ENCODE measurements at regions of chr1 and their contacts with region 1.

Region 1: GRCh38 chr1:6489799-6490180 is 1.7 kb downstream of the PLEKHG5 start:
- DNase-seq: peak; percentile 50
- ATAC-seq: peak; percentile 81
- H3K4me3 ChIP-seq: peak overlapping the region; percentile 88 to 99 (median 89)
- H3K27ac ChIP-seq: no peak overlapping the region
- H3K4me1 ChIP-seq: peaks cover 52% of the 10 kb centered on the region
- H3K27me3 ChIP-seq: peaks cover 0 to under 1% of the 10 kb centered on the region in 2 experiments; a peak in 1 of 5 replicates
- CTCF ChIP-seq: peak; percentile 92
- EP300 ChIP-seq: no peak
- POLR2A ChIP-seq: no peak
- RAD21 ChIP-seq: peak; percentile 47

Region 2: DNA sequence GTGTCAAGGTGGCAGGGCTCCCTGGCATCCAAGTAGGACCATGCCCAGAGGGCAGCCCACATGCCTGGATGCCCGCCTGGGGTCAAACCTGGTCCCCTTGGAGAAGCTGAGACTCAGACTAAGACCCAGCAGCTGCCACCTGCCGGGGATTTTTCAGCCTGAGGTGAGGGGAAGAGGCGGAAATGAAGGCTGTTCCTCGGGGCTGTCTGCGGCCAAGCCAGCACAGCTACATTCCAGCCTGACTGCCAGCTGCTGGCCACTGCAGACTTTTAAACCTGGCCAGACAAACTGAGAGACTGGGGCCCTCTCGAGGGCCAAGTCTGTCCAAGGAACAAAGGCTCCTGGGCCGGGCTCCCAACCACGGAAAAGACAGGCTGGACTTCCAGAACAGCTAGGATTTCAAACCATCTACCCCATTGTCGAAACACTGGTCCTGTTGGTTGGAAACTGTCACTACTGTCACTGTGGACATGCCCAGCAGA is 23.6 kb after region 1 on chr1:
- CTCF ChIA-PET with region 1: no interaction called
- POLR2A ChIA-PET with region 1: interaction called, 13 read pairs
- in situ Hi-C with region 1: no loop called
- intact Hi-C with region 1: no loop called
- DNase-seq: no peak
- ATAC-seq: peak; percentile 58
- H3K4me3 ChIP-seq: peak overlapping the region in 2 of 3 experiments; percentile 31 to 57; a peak in 4 of 6 replicates
- H3K27ac ChIP-seq: peak overlapping the region; percentile 40
- H3K4me1 ChIP-seq: peaks cover 59% of the 10 kb centered on the region
- H3K27me3 ChIP-seq: peaks cover 3 to 5% of the 10 kb centered on the region in 2 experiments; a peak in 3 of 5 replicates
- CTCF ChIP-seq: peak; percentile 51
- EP300 ChIP-seq: no peak
- POLR2A ChIP-seq: no peak
- RAD21 ChIP-seq: no peak

Region 3: GRCh38 chr1:6523566-6523965 is 33.8 kb after region 1 on chr1:
- CTCF ChIA-PET with region 1: interaction called, 24 read pairs
- POLR2A ChIA-PET with region 1: no interaction called
- in situ Hi-C with region 1: loop called (anchors 5 kb)
- intact Hi-C with region 1: loop called (anchors 1 kb)
- DNase-seq: peak; percentile 65
- ATAC-seq: peak; percentile 81
- H3K4me3 ChIP-seq: no peak overlapping the region
- H3K27ac ChIP-seq: no peak overlapping the region
- H3K4me1 ChIP-seq: no peaks in the 10 kb centered on the region
- H3K27me3 ChIP-seq: no peaks in the 10 kb centered on the region
- CTCF ChIP-seq: peak; percentile 81
- EP300 ChIP-seq: no peak
- POLR2A ChIP-seq: no peak
- RAD21 ChIP-seq: no peak; the same call in 1 of the 2 replicates

Region 4: DNA sequence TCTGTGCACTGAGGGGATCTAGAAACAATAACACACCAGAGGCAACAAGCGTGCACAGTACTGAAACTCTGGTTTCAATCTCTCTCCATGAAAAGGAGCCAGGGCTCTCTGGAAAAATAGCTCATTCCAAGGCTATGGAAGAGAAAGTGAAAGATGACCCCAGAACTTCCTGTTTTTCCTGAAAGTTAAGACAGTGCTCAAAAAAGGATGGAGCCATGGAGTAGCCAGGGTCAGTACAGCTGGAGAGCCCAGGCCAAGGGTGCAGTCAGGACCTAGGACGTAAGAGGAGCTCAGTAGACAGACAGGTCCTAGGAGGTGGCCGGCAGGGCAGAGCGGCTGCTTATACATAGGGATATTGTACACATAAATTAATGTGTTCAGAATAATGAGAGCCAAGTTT is 45.4 kb after region 1 on chr1:
- CTCF ChIA-PET with region 1: no interaction called
- POLR2A ChIA-PET with region 1: no interaction called
- in situ Hi-C with region 1: no loop called
- intact Hi-C with region 1: no loop called
- DNase-seq: no peak
- ATAC-seq: no peak
- H3K4me3 ChIP-seq: no peak overlapping the region
- H3K27ac ChIP-seq: no peak overlapping the region
- H3K4me1 ChIP-seq: no peaks in the 10 kb centered on the region
- H3K27me3 ChIP-seq: no peaks in the 10 kb centered on the region
- CTCF ChIP-seq: no peak
- EP300 ChIP-seq: no peak
- POLR2A ChIP-seq: no peak
- RAD21 ChIP-seq: no peak

Region 5: DNA sequence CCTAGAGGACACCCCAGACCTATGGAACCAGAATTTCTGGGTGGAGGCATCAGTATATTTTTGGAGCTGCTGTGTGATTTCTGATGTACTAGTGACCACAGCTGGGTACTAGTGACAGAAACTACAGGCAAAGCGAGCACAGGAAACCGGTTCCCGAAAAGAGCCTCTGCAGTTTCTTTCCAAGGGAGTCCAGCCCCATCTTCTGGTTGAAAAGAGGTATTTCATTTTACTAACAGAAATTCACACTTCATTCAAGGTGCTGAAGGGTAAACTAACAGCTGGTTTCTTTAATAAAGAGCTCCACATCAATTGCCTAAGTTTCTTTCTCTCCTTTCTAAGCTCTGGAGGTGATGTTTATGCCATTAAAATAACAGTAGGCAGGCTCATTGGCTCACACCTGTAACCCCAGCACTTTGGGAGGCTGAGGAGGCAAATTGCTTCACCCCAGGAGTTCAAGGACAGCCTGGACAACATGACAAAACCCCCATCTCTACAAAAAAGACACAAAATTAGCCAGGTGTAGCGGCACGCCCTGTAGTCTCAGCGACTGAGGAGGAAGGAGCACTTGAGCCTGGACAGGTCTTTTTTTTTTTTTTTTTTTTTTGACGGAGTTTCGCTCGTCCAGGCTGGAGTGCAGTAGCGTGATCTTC is 156.8 kb after region 1 on chr1:
- CTCF ChIA-PET with region 1: interaction called, 3 read pairs
- POLR2A ChIA-PET with region 1: interaction called, 3 read pairs
- in situ Hi-C with region 1: no loop called
- intact Hi-C with region 1: loop called (anchors 5 kb)
- DNase-seq: peak; percentile 30
- ATAC-seq: peak; percentile 44; the same call in 2 of the 3 replicates
- H3K4me3 ChIP-seq: no peak overlapping the region
- H3K27ac ChIP-seq: no peak overlapping the region
- H3K4me1 ChIP-seq: no peaks in the 10 kb centered on the region
- H3K27me3 ChIP-seq: no peaks in the 10 kb centered on the region
- CTCF ChIP-seq: peak; percentile 61
- EP300 ChIP-seq: no peak
- POLR2A ChIP-seq: no peak
- RAD21 ChIP-seq: peak; percentile 23; the same call in 1 of the 2 replicates

Region 6: DNA sequence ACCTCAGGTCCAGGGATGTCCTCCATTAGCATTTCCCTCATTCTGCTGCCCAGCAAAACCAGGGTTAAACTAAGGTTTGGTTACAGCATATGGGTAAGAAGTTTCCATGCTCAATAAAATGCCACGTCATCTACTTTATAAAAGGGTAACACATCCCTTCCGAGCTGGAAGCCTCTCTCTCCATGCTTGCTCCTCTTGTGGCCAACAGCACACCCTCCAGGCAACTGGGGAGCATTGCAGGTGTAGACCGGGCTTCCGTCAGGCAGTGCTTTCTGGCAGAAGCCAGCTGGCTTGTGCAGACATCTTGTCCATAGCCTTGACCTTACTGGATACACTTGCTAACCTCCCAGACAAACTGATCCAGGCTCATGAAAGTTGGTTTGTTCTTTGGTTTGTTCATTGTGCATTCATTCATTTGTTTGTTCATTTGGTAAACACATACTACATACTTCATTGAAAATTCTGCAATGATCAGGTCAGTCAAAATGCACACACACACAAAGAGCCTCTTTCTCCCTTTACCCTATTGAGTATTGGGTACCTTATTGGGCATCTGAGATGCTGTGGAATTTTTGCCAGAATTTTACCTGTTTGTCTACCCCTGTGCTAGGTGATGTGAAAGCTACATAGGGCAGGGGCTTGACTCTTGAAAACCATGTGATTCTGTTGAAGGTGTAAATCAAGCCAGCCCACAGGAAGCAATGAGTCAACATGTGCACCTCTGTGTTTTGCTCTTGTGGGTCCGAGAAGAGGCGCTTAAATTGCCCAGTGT is 718.3 kb after region 1 on chr1:
- CTCF ChIA-PET with region 1: no interaction called
- POLR2A ChIA-PET with region 1: no interaction called
- in situ Hi-C with region 1: loop called (anchors 25 kb)
- intact Hi-C with region 1: no loop called
- DNase-seq: peak; percentile 25
- ATAC-seq: peak; percentile 86
- H3K4me3 ChIP-seq: no peak overlapping the region
- H3K27ac ChIP-seq: no peak overlapping the region
- H3K4me1 ChIP-seq: no peaks in the 10 kb centered on the region
- H3K27me3 ChIP-seq: no peaks in the 10 kb centered on the region; a peak in 1 of 5 replicates
- CTCF ChIP-seq: peak; percentile 86
- EP300 ChIP-seq: no peak
- POLR2A ChIP-seq: no peak
- RAD21 ChIP-seq: peak; percentile 74

Measured in HepG2 (cell line).